Cardiac septum (tissue), 1 donor: ENCODE measurements at regions of chr2 and their contacts with region 1.

Region 1: DNA sequence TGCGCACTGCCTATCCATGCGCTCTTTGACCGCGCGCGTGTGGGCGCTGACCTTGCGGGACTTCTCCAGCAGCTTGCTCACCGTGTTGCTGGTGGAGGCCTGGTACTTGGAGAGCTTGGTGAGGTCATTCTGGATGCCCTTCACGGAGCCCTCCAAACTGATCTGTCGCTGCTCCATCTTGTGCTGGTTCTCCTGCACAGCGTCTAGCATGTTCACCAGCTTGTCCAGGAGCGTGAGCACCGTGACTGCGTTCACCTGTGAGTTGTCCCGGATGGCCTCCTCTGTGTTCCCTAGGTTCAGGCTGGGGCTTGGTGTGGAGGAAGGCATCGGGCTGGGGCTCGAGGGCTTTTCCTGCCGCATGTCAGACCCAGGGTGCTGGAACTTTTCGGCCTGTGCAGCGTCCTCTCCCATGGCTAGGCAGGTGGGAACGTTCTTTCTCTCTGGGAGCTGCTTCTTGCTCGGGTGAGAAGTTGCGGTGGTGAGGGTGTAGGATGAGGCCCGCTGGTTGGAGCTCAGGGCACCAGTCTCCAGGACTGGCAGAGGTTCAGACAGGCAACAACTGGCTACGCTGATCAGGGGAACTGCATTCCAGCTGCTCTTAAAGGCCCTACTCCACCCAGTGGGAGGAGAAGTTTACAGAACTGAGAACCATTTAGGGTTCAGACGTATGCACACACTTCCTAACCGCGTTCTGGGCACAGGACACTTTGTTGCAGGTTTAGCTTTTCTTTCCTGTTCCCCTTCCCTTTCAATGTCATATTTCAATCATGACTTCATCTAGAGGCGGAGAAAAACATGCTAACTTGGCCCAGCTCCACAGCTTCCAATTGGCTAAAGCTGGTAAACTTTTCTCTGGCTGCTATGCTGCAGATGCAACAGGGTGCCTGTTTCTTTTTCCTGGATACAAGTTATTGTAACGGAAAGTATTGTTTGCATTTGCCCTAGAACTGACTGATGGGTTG is at the start of gene CAVIN2:
- DNase-seq: no peak
- total RNA-seq, gene CAVIN2: 145 TPM

Region 2: DNA sequence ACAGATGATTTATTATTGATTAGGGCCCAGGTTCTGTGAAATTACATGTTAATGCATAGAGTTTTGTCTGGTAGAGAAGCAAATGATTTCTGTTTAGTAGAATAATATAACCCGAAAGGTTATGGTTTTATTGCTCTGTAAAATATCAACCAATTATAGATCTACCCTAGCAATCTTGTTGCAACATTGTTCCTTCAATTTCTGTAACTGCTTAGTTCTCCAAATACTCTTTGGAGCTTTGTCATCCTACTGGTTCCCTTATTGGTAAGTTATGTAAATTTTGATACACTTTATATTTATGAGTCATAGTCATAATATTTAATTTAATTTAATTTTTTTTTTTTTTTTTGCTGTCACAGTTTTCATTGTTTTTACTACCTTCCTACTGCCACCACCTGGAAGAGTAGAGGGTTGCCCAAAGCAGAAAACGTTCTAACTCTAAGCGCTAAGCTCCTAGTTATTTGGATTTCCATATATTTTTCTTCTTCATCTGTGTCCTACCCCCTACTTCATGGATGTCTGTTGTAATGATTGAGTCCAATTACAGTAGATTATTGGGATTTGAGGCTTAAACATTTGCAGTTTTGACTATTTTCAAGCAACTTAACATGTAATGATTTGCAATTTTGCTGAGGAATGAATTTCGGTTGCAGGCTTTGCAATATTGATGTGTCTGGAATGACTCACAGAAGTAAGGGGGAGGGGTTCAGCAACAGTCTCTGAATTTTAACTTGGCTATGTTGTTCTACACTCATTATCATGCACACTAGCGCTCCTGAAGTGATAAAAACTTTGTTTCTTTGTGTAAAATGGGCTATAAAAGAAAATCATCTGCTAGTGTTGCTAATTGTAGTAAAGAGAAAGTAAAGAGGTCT is 117.8 kb before region 1 on chr2:
- intact Hi-C with region 1: no loop called
- DNase-seq: no peak

Region 3: DNA sequence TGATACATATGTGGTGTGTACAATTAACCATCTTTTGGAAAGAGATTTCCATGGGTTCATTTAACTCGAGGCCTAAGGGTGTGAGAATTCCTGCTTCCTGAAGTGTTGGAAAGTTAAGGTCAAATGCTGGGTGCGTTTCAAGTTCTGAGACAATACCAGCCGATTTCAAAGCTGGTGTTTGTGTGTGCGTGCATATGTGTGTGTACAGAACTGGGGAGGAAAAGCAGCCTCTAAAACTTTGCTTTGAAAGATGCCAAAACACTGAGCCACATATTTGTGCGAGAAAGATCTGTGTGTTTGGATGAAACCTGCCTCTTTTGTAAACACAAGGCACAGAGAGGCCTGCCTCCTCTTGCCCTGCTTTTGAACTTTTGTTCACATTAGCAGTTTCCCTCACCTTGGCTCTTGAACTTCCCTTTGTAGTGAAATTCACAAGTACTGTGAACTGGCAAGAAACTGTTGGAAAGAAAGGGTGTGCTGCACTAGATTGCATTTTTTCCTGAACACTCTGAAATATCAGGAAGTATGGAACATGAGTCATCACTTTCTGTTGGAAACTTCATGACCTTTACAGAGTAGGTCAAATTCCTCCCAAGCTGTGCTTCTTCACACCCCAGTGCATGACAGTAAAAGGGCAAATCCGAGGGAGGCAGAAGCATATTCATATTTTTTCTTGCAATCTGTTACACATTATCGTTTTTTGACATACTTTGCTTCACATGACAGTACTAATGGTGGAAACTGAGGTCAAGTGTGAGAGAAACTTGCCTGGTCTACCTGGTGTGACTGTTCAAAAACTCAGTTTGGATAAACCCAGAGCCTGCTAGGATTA is 20.1 kb after region 1 on chr2:
- intact Hi-C with region 1: loop called (anchors 2 kb)
- DNase-seq: no peak